ENCODE measurements at regions of chr12 and their contacts with region 1.

Region 1: GRCh38 chr12:76410781-76411180 is 62.6 kb upstream of the BBS10 start:
- DNase-seq: no peak
- ATAC-seq: no peak
- H3K4me3 ChIP-seq: no peak overlapping the region
- H3K27ac ChIP-seq: no peak overlapping the region
- H3K4me1 ChIP-seq: no peaks in the 10 kb centered on the region
- H3K27me3 ChIP-seq: no peaks in the 10 kb centered on the region
- CTCF ChIP-seq: no peak

Region 2: GRCh38 chr12:75250964-75251363 is 1159.8 kb before region 1 on chr12:
- CTCF ChIA-PET with region 1: no interaction called
- POLR2A ChIA-PET with region 1: interaction called, 13 read pairs
- in situ Hi-C with region 1: no loop called
- intact Hi-C with region 1: no loop called
- DNase-seq: no peak
- ATAC-seq: no peak
- H3K4me3 ChIP-seq: no peak overlapping the region
- H3K27ac ChIP-seq: no peak overlapping the region
- H3K4me1 ChIP-seq: no peaks in the 10 kb centered on the region
- H3K27me3 ChIP-seq: no peaks in the 10 kb centered on the region
- CTCF ChIP-seq: no peak

Region 3: DNA sequence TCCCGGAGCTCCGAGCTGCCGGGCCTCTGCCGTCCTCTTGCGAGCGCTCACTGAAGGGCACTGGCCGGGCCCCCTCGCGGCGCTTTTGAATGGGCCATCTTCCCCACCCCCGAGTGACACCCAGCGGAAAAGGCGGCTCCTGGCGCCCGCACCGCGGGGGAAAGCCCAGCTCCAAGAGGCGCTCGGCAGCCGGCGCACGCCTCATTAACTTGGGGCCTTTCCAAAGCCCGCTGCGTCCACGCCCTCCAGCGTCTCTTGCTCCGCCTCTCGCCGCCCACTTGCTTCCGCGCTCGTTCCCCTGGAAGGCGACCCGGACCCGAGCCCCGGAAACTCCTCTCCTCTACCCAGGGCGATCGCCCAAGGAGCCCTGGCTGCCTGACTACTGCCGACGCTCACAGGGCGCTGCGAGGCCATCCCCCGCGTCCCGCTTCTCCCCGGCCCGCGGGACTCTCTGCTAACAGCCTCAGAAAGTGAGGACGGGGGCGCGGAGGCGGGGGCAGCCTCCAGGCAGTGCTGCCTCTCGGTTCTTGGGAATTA is 379.2 kb before region 1 on chr12 and contains the start of gene PHLDA1:
- CTCF ChIA-PET with region 1: no interaction called
- POLR2A ChIA-PET with region 1: no interaction called
- in situ Hi-C with region 1: no loop called
- intact Hi-C with region 1: no loop called
- DNase-seq: no peak
- ATAC-seq: peak; percentile 81
- H3K4me3 ChIP-seq: peak within 1 kb of the TSS; percentile 79 to 93
- H3K27ac ChIP-seq: peak within 1 kb of the TSS; percentile 100
- H3K4me1 ChIP-seq: peaks cover 32% of the 10 kb centered on the region
- H3K27me3 ChIP-seq: no peaks in the 10 kb centered on the region
- CTCF ChIP-seq: peak; percentile 65
- total RNA-seq, gene PHLDA1: 159 TPM

Region 4: GRCh38 chr12:76329163-76329562 is 81.6 kb before region 1 on chr12:
- CTCF ChIA-PET with region 1: no interaction called
- POLR2A ChIA-PET with region 1: interaction called, 16 read pairs
- in situ Hi-C with region 1: no loop called
- intact Hi-C with region 1: no loop called
- DNase-seq: no peak
- ATAC-seq: no peak
- H3K4me3 ChIP-seq: no peak overlapping the region
- H3K27ac ChIP-seq: no peak overlapping the region
- H3K4me1 ChIP-seq: no peaks in the 10 kb centered on the region
- H3K27me3 ChIP-seq: no peaks in the 10 kb centered on the region
- CTCF ChIP-seq: no peak

Measured in Panc1 (cell line).